Colonic mucosa (tissue), 4 donors: ENCODE measurements at regions of chr6 and their contacts with region 1.

Region 1: GRCh38 chr6:112773187-112773586 is 426.1 kb downstream of the RFPL4B start:
- DNase-seq: no peak
- H3K4me3 ChIP-seq: no peak overlapping the region
- H3K27ac ChIP-seq: no peak overlapping the region
- H3K4me1 ChIP-seq: no peaks in the 10 kb centered on the region
- H3K27me3 ChIP-seq: no peaks in the 10 kb centered on the region
- CTCF ChIP-seq: no peak

Region 2: DNA sequence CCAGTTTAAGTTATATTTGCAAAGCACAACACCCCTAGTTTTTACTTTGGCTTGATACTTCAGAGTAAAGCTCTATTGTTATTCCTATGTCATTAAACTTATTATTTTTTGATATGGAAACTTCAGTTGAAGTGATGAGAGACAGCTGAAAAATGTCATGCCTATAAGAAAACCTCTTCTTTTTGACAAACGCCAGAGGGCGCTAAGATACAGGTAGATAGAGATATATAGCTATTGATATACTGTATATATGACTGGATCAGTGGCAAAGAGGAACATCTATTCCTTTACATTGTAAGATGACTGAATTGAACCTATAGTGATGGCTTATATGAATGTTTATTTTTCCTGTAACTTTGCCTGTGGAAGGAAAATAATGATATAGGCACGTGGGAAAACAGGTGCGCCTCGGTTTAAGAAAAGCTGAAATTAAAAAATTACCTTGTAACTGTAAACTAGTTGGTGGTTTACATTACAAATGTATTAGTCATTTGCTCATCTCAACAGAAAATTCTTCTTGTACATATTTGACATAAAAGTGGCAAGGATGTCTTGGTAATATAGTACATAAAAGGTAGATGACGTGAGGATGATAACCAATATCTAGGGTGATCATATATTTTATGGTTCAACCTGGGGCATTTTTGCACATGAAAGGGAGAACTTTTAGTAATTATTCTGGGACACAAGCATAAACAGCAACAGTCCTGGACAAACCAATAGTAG is 592.9 kb before region 1 on chr6:
- intact Hi-C with region 1: no loop called
- DNase-seq: peak; percentile 46
- H3K4me3 ChIP-seq: no peak overlapping the region
- H3K27ac ChIP-seq: no peak overlapping the region
- H3K4me1 ChIP-seq: no peaks in the 10 kb centered on the region
- H3K27me3 ChIP-seq: no peaks in the 10 kb centered on the region
- CTCF ChIP-seq: peak; percentile 55

Region 3: GRCh38 chr6:113306552-113307145 is 533.5 kb after region 1 on chr6:
- intact Hi-C with region 1: loop called (anchors 10 kb)
- DNase-seq: peak; percentile 82
- H3K4me3 ChIP-seq: no peak overlapping the region
- H3K27ac ChIP-seq: no peak overlapping the region
- H3K4me1 ChIP-seq: no peaks in the 10 kb centered on the region
- H3K27me3 ChIP-seq: no peaks in the 10 kb centered on the region
- CTCF ChIP-seq: peak; percentile 23